HEK293 (cell line): ENCODE measurements at regions of chr5 and their contacts with region 1.

Region 1: DNA sequence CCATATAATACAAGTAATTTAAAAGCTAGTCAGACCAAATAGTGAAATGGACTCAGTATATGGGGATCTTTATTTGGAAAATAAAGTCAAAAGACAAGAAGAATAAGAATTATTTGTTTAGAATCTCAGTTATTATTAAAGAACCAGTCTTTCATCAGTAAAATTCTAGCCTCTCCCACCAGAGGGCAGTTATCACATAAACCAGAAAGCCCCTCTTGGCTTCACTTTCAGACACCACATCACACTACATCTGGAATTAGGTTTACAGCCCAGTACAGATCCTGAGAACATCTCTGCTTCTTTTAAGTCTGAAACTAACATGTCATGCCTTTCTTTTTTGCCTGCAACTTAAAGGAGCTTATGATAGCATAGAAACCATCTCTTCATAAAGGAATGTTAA is 12.2 kb upstream of the HSPB3 start:
- H3K4me3 ChIP-seq: no peak overlapping the region
- H3K27ac ChIP-seq: no peak overlapping the region
- H3K4me1 ChIP-seq: no peaks in the 10 kb centered on the region
- CTCF ChIP-seq: 0 out of 2 replicates have a peak, but pooled peaks have one; percentile 20

Region 2: DNA sequence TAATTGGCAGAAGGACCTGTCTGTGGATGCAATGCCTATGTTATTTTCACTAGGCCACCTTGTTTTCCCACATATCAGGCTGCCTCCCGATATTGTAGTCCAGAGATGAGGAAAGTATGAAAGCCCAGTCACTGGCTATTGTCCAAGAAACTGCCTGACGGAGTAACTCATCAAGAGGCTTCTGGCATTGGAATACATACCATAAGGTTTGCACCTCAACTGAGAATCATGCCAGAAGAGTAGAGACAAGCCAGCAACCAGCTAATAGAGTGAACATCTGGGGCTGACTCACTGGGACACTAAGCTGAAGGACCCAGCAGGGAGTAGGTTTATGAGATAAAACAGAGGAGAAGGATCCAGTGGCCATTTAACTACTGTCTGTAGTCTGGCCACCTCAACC is 1100.1 kb before region 1 on chr5:
- CTCF ChIA-PET with region 1: no interaction called
- POLR2A ChIA-PET with region 1: no interaction called
- H3K4me3 ChIP-seq: no peak overlapping the region
- H3K27ac ChIP-seq: no peak overlapping the region
- H3K4me1 ChIP-seq: no peaks in the 10 kb centered on the region
- CTCF ChIP-seq: no peak

Region 3: GRCh38 chr5:54401515-54401914 is 41.8 kb before region 1 on chr5:
- CTCF ChIA-PET with region 1: no interaction called
- POLR2A ChIA-PET with region 1: no interaction called
- H3K4me3 ChIP-seq: no peak overlapping the region
- H3K27ac ChIP-seq: no peak overlapping the region
- H3K4me1 ChIP-seq: no peaks in the 10 kb centered on the region; the same call in 1 of the 2 replicates
- CTCF ChIP-seq: no peak

Region 4: DNA sequence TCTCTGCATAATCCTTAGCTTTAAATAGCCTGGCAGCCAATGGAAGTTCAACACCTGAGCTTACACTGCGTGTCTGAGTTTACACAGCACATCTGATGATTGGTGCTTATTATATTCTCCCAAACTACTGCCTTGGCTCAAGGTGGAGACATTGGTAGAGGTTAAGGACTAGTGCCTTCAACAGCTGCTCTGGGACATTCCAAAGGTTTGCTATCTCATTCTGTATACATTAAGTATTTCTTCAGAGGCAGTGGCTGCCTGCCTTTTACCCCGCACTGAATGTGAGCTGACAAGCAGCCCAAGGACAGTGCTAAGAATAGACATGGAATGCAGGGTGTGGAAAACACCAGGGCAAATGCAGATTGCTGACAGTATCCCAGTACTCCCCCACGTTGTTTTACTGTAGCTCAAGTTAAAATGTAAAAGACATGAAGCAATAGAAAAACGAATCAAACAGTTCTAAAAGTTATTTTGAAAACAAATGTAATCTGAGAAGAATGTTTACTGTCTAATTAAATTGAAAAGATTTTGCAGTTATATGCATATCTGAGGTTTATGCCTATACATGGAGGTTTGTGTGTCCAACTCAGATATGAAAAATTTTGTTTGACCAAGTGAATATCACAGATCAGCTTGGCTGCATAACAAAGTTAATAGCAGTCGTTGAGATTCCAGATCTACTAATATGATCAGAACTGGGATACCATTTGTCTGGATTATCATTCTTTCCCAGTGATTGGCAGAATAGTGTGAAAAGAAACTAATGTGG is 14.0 kb after region 1 on chr5:
- CTCF ChIA-PET with region 1: interaction called, 20 read pairs
- POLR2A ChIA-PET with region 1: no interaction called
- H3K4me3 ChIP-seq: no peak overlapping the region
- H3K27ac ChIP-seq: no peak overlapping the region
- H3K4me1 ChIP-seq: no peaks in the 10 kb centered on the region
- CTCF ChIP-seq: no peak